Breast epithelium (tissue), 4 donors: ENCODE measurements at regions of chr15 and their contacts with region 1.

Region 1: GRCh38 chr15:89750560-89751542 is at the start of gene MESP1:
- DNase-seq: peak; percentile 83 to 87
- H3K4me3 ChIP-seq: peak within 1 kb of the TSS; percentile 66 to 86 (median 66)
- H3K27ac ChIP-seq: peak within 1 kb of the TSS; percentile 84
- H3K4me1 ChIP-seq: peaks cover 0 to 13% of the 10 kb centered on the region in 2 donors
- H3K27me3 ChIP-seq: no peaks in the 10 kb centered on the region
- CTCF ChIP-seq: peak; percentile 74 to 92 (median 82)
- POLR2A ChIP-seq: no peak
- total RNA-seq, gene MESP1: 5.9 to 12.8 (median 6.2) TPM

Region 2: DNA sequence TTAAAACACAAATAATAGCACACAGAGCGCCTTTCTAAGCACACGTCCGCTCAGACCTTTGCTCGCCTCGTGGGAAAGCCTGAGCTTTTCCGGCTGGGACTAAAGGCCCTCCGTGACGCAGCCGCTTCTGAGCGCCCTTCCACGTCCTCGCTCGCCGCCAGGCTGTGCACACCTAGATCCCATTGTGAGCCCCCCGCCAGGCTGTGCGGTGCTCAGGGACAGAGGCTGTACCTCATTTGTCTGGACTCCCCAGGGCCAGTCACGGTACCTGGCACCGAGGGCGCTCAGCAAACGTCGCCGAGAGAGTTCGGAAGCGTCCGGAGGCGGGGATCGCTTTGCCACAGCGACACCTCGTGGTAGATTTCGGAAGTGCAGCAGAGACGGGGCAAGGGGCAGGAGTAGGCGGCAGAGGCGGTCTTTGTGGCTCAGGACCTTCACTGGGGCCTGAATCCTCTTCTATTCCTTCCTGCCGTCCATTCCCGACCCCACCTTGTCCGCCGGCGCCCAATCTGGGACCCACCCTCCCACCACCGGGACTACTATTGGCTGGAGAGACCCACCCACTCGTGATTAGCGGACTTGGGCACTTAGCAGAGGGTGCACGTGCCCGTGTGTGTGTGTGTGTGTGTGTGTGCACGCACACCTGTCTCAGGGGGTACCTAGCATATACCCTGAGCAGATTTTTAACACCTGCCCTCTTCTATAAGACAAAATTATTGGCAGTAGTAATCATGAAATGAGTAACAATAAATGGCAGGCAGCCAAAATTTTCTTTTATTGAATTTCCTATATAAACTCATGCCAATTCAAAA is 320.1 kb before region 1 on chr15:
- intact Hi-C with region 1: no loop called
- DNase-seq: peak; percentile 64 to 91
- H3K4me3 ChIP-seq: peak overlapping the region; percentile 26 to 50 (median 46)
- H3K27ac ChIP-seq: no peak overlapping the region
- H3K4me1 ChIP-seq: no peaks in the 10 kb centered on the region
- H3K27me3 ChIP-seq: peaks cover 0 to 6% of the 10 kb centered on the region in 2 donors
- CTCF ChIP-seq: peak; percentile 94 to 99 (median 97)
- POLR2A ChIP-seq: no peak

Region 3: GRCh38 chr15:89647191-89647851 is 103.5 kb before region 1 on chr15:
- intact Hi-C with region 1: loop called (anchors 10 kb)
- DNase-seq: peak; percentile 56 to 78
- H3K4me3 ChIP-seq: no peak overlapping the region
- H3K27ac ChIP-seq: no peak overlapping the region
- H3K4me1 ChIP-seq: no peaks in the 10 kb centered on the region
- H3K27me3 ChIP-seq: no peaks in the 10 kb centered on the region
- CTCF ChIP-seq: peak in 2 of 3 donors; percentile 69 to 79
- POLR2A ChIP-seq: no peak

Region 4: GRCh38 chr15:89874926-89875564 is 124.2 kb after region 1 on chr15:
- intact Hi-C with region 1: loop called (anchors 5 kb)
- DNase-seq: peak; percentile 72 to 81
- H3K4me3 ChIP-seq: no peak overlapping the region
- H3K27ac ChIP-seq: no peak overlapping the region
- H3K4me1 ChIP-seq: no peaks in the 10 kb centered on the region
- H3K27me3 ChIP-seq: no peaks in the 10 kb centered on the region
- CTCF ChIP-seq: peak; percentile 64 to 90 (median 82)
- POLR2A ChIP-seq: no peak